Astrocyte of the cerebellum (primary cell): ENCODE measurements at regions of chr17 and their contacts with region 1.

Region 1: DNA sequence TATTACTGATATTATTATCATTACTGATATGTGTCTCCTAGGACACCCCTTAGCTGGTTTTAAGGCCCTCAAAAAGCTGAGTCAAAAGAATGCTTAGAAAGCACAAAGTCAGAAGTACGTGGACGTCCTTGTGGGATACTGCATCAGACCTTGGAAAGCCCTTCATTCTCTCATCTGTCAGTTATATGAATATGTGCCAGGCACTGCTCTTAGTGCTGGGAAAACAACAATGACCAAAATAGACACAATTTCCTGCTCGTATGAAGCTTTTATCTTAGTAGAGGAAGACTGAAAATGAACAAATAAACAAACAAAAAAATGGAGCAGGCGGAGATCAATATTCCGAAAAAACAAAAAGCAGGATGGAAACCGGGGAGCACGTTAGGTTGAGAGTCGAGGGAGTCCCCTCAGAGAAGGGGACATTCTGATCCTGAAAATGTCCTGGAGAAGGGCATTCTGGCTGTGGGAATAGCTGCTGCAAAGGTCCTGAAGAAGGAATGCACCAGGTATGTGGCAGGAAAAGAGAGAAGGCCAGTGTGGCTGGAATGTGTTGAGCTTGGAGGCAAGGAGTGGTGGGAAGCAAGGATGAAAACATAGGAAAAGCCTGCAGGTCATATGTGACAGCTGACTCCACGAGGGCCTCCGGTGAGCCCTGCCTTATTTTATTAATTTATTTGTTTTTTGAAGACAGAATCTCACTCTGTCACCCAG is 15.5 kb upstream of the TMEM94 start:
- DNase-seq: no peak
- H3K4me3 ChIP-seq: no peak overlapping the region
- CTCF ChIP-seq: no peak

Region 2: DNA sequence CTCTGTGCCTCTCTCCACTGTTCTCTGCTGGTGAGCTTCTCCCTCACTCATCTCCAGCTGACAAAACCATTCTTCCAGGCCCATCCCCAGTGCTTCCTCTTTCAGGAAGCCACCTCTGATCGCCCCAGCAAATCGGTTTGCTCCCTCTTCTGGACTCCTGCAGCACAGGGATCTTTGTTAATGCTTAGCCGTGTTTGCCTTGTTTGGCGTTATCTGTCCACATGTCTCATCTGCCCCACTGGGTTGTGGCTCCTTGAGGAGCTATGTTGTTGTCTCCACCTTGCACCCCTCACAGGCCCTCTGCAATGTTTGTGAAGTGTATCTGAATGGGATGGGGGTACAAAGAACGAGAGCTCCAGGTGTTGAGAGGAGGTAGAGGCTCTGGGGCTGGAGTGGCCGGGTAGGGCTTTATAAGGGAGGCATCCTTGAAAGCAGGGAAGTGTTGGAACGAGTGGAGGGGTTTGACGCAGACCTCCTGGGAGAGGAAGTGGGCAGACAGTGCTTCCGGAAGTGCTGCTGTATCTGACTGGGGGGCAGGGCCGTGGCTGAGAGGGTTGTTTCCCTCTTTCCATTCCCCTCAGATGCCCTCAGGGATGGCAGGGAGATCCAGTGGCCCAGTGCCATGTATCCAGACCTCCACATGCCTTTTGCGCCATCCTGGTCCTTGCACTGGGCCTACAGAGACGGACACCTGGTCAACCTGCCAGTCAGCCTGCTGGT is 46.6 kb after region 1 on chr17:
- in situ Hi-C with region 1: loop called (anchors 5 kb)
- DNase-seq: no peak
- H3K4me3 ChIP-seq: no peak overlapping the region
- CTCF ChIP-seq: no peak

Region 3: DNA sequence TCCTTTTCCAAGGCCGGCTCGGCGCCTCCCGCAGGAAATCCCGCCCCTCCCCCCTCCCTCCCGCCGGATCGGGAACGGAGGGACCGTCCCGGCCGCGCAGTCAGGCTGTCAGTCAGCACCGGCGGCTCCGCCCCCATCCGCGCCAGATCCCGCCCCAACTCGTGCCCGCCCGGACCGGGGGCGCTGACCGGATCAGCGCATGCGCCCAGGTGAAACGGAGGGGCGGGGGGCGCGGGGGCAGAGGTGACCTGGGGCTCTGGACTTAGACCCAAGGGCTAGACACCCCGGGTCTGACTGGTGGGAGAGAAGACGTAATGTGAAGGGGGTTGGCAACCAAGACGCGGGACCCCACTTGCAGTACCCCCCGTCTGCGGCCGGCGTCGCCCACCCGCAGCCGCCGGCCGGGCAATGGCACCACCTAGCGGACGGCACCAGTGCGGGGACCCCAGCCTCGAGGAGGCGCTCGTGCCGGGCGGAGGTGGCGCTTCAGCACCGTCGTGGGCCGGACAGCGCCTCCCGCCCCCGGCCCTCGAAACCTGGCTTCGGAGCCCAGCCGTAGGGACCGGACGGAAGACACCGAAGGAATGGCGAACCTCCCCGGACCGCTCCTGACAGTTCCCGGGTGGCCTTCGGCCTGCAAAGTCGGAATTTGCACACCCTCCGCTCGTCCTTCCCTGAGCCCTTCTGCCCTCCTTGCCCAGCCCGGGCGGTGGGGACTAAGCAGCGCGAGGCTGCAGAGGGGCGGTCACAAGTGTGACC is 74.8 kb after region 1 on chr17 and contains the start of gene CASKIN2:
- in situ Hi-C with region 1: no loop called
- DNase-seq: peak; percentile 72
- H3K4me3 ChIP-seq: peak within 1 kb of the TSS; percentile 78
- CTCF ChIP-seq: peak; percentile 97